ENCODE measurements at regions of chr17 and their contacts with region 1.

Region 1: GRCh38 chr17:82273327-82274133 is at the start of gene CSNK1D:
- DNase-seq: peak; percentile 97
- H3K4me3 Mint-ChIP-seq: peak within 1 kb of the TSS; percentile 88
- H3K27ac Mint-ChIP-seq: peak within 1 kb of the TSS; percentile 100
- H3K4me1 Mint-ChIP-seq: peaks cover 35% of the 10 kb centered on the region
- H3K27me3 Mint-ChIP-seq: peaks cover 2% of the 10 kb centered on the region
- total RNA-seq, gene CSNK1D: 137 and 146 TPM in 2 replicates

Region 2: GRCh38 chr17:82236142-82236981 is 37.2 kb before region 1 on chr17:
- intact Hi-C with region 1: loop called (anchors 5 kb)
- DNase-seq: peak; percentile 91
- H3K4me3 Mint-ChIP-seq: peak overlapping the region; percentile 35
- H3K27ac Mint-ChIP-seq: no peak overlapping the region
- H3K4me1 Mint-ChIP-seq: peaks cover 28% of the 10 kb centered on the region
- H3K27me3 Mint-ChIP-seq: no peaks in the 10 kb centered on the region

Region 3: GRCh38 chr17:82292251-82293154 is 19.0 kb after region 1 on chr17:
- intact Hi-C with region 1: loop called (anchors 2 kb)
- DNase-seq: peak; percentile 98
- H3K4me3 Mint-ChIP-seq: peak overlapping the region; percentile 87
- H3K27ac Mint-ChIP-seq: peak overlapping the region; percentile 93
- H3K4me1 Mint-ChIP-seq: peaks cover 43% of the 10 kb centered on the region
- H3K27me3 Mint-ChIP-seq: peaks cover 2% of the 10 kb centered on the region

Measured in activated CD4-positive, alpha-beta T cell treated with anti-CD3 and anti-CD28 coated beads, Interleukin-2, amount 10 ng/mL, durations not matched to agents 24 days and 14 days (primary cell).